MCF 10A (cell line): ENCODE measurements at regions of chr3 and their contacts with region 1.

Region 1: GRCh38 chr3:119676771-119677640 is at the start of gene COX17:
- DNase-seq: peak; percentile 98
- H3K4me3 Mint-ChIP-seq: peak within 1 kb of the TSS; percentile 79
- H3K27ac Mint-ChIP-seq: peak within 1 kb of the TSS; percentile 91
- H3K4me1 Mint-ChIP-seq: peaks cover 8% of the 10 kb centered on the region
- H3K27me3 Mint-ChIP-seq: no peaks in the 10 kb centered on the region
- CTCF ChIP-seq: no peak
- total RNA-seq, gene COX17: 47.9 and 55.4 TPM in 2 replicates

Region 2: GRCh38 chr3:119145500-119146191 is 531.4 kb before region 1 on chr3 and contains the start of gene TEX55:
- CTCF ChIA-PET with region 1: interaction called, 5 read pairs
- POLR2A ChIA-PET with region 1: no interaction called
- intact Hi-C with region 1: loop called (anchors 1 kb)
- DNase-seq: peak; percentile 62
- H3K4me3 Mint-ChIP-seq: no peak within 1 kb of the TSS
- H3K27ac Mint-ChIP-seq: no peak within 1 kb of the TSS
- H3K4me1 Mint-ChIP-seq: peaks cover 14% of the 10 kb centered on the region
- H3K27me3 Mint-ChIP-seq: no peaks in the 10 kb centered on the region
- CTCF ChIP-seq: peak; percentile 58
- total RNA-seq, gene TEX55: not detected in 2 replicates

Region 3: DNA sequence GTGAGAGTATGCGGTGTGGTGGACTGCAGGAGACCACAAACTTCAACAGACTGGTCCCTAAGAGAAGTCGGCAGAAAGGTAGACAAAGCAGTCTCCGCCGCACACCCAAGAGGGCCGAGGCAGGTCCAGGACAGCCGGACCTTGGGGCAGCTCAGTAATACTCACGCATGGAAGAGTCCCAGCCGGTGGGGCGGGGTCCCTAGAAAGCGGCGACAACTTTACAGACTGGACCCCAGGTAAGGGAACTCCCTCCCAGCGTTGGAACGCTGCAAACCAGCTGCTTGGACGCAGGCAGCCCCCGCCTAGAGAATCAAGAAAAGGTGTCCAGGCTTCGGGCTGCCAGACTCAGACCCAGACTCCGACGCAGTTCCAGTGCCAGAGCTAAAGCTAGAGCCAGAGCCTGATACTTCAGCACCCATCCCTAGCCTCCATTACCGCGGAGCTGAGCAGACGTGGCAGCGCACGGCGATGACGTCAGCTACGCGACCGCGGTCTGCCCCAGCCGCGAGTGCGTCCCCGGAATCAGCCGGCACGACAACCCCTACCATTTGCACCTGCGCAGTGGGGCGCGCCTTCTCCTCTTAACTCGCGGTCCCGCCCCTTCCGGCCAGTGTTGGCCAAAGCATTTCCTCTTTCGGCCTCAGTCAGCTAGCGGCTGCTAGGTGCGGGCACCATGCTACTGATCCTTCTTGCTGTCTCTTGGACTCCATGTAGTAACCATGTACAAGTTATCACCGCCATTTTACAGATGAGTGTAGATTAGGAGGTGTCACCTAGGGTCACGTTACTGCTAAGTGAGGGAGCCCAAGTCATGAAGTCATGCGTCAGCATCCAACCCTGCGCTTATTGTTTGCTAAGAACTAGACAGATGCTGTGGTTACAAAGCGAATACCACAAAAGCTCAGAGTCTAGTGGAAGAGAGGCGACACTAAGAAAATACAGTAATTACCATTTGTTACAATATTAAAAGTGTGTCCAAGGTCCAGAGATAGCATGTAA is 213.5 kb before region 1 on chr3 and contains the start of gene TMEM39A:
- CTCF ChIA-PET with region 1: interaction called, 30 read pairs
- POLR2A ChIA-PET with region 1: interaction called, 31 read pairs
- intact Hi-C with region 1: loop called (anchors 2 kb)
- DNase-seq: peak; percentile 98
- H3K4me3 Mint-ChIP-seq: peak within 1 kb of the TSS; percentile 89
- H3K27ac Mint-ChIP-seq: peak within 1 kb of the TSS; percentile 94
- H3K4me1 Mint-ChIP-seq: peaks cover 28% of the 10 kb centered on the region
- H3K27me3 Mint-ChIP-seq: no peaks in the 10 kb centered on the region
- CTCF ChIP-seq: no peak
- total RNA-seq, gene TMEM39A: 87.1 and 105 TPM in 2 replicates

Region 4: GRCh38 chr3:119498186-119498987 is 178.6 kb before region 1 on chr3 and contains the start of gene TIMMDC1:
- CTCF ChIA-PET with region 1: interaction called, 4 read pairs
- POLR2A ChIA-PET with region 1: interaction called, 59 read pairs
- intact Hi-C with region 1: loop called (anchors 10 kb)
- DNase-seq: peak; percentile 98
- H3K4me3 Mint-ChIP-seq: peak within 1 kb of the TSS; percentile 99
- H3K27ac Mint-ChIP-seq: peak within 1 kb of the TSS; percentile 98
- H3K4me1 Mint-ChIP-seq: peaks cover 16% of the 10 kb centered on the region
- H3K27me3 Mint-ChIP-seq: no peaks in the 10 kb centered on the region
- CTCF ChIP-seq: no peak
- total RNA-seq, gene TIMMDC1: 108 and 113 TPM in 2 replicates

Region 5: GRCh38 chr3:119662604-119663373 is 14.2 kb before region 1 on chr3:
- CTCF ChIA-PET with region 1: interaction called, 5 read pairs
- POLR2A ChIA-PET with region 1: interaction called, 22 read pairs
- intact Hi-C with region 1: no loop called
- DNase-seq: peak; percentile 29
- H3K4me3 Mint-ChIP-seq: no peak overlapping the region
- H3K27ac Mint-ChIP-seq: no peak overlapping the region
- H3K4me1 Mint-ChIP-seq: peaks cover 10% of the 10 kb centered on the region
- H3K27me3 Mint-ChIP-seq: no peaks in the 10 kb centered on the region
- CTCF ChIP-seq: no peak

Region 6: GRCh38 chr3:120182724-120183524 is 505.9 kb after region 1 on chr3:
- CTCF ChIA-PET with region 1: interaction called, 3 read pairs
- POLR2A ChIA-PET with region 1: no interaction called
- intact Hi-C with region 1: loop called (anchors 5 kb)
- DNase-seq: peak; percentile 80
- H3K4me3 Mint-ChIP-seq: no peak overlapping the region
- H3K27ac Mint-ChIP-seq: peak overlapping the region; percentile 83
- H3K4me1 Mint-ChIP-seq: peaks cover 27% of the 10 kb centered on the region
- H3K27me3 Mint-ChIP-seq: no peaks in the 10 kb centered on the region
- CTCF ChIP-seq: peak; percentile 42